Left cardiac atrium (tissue), 4 donors: ENCODE measurements at regions of chr1 and their contacts with region 1.

Region 1: DNA sequence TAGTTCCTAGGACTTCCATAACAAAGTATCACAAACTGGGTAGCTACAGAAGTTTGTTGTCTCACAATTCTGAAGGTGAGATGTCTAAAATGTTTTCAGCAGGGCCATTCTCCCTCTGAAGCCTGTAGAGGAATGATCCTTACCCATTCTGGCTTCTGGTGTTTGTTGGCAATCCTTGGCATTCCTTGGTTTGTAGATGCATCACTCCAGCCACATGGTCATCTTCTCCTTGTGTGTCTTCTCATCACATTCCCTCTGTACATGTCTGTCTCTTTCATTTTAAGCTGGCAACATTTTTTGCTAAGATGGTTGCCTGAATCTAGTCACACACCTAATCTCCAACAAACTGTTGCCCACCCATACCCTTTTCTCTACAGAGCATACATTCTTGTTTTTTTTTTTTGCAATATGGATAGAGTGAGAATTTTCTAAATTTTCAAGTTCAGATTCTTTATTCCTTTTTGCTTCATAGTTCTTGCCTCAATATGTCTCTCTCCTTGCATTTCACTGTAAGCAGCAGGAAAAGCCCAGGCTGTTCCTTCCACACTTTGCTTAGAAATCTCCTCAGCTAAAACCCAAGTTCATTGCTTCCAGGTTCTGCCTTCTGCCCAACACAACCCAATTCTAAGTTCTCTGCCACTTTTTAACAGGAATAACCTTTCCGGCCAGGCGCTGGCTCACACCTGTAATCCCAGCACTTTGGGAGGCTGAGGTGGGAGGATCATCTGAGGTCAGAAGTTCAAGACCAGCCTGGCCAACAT is 18.3 kb downstream of the ZBED6 start:
- DNase-seq: no peak
- ATAC-seq: no peak

Region 2: GRCh38 chr1:203843435-203843834 is 29.7 kb after region 1 on chr1:
- intact Hi-C with region 1: loop called in 1 of 2 experiments (anchors 5 kb)
- DNase-seq: no peak
- ATAC-seq: no peak